ENCODE measurements at regions of chr4 and their contacts with region 1.

Region 1: GRCh38 chr4:71713611-71714203 is 70.2 kb downstream of the GC start:
- DNase-seq: no peak
- ATAC-seq: no peak

Region 2: DNA sequence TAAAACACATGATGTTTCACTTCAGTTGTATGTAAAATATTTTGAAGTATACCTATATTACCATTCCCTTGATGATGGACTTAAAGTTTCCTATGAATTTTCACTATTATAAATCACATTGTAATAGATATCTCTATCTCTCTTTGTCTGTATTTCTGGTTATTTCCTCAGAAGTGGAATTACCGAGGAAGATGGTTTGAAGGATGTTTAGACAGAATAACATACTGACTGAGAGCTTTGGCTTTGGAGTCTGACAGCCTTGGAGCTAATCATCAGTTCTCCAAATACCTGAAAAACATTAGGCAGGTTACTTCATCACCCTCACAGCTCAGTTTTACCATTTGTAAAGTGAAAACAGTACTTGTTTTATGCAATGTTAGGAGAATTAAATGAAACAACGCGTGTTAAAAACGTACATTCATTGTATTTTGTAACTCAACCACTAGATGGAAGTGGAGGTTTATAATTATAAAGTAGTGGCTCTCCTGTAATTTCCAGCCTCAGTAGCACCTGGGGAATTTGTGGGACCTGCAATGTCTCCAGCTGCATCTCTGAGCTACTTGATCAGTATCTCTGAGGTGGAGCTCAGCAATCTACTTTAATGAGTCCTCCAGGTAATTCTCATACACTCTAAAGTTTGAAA is 1061.7 kb before region 1 on chr4:
- intact Hi-C with region 1: loop called (anchors 10 kb)
- DNase-seq: no peak
- ATAC-seq: peak; percentile 46

Region 3: DNA sequence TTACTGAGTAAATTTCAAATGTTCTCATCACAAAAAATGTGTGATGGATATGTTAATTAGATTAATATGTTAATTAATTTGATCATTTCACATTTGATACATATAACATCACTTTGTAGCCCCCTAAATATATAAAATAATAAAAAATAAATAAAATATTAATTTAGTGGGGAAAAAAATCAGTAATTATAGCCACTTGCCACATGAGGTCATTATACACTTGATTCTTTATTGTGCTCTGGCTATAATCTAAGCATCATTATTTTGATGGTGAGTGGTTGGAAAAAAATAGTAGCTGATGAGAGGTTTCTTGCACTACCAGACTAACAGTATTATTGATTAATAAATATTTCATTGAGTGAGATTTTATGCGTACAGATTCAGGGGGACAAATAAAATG is 662.9 kb before region 1 on chr4:
- intact Hi-C with region 1: loop called (anchors 10 kb)
- DNase-seq: no peak
- ATAC-seq: no peak

Region 4: DNA sequence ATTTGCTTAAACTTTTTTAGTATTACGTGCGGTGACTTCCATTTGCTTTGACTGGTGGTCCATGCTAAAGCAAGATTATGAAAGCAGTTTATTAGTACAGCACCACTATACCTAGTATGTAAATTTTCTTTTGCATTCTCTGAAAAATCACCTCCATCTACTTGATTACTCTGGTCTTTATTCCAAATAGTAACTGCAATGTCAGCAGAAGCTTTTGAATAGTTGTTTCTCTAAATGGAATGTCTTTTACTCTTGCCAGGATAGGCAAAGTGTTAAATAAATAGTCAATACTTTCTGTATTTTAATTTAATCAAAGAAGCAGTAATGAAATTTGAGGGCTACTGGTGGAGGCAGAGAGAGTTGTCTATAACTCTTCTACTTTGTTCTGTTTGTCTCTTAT is 542.1 kb before region 1 on chr4:
- intact Hi-C with region 1: no loop called
- DNase-seq: no peak
- ATAC-seq: no peak

Region 5: DNA sequence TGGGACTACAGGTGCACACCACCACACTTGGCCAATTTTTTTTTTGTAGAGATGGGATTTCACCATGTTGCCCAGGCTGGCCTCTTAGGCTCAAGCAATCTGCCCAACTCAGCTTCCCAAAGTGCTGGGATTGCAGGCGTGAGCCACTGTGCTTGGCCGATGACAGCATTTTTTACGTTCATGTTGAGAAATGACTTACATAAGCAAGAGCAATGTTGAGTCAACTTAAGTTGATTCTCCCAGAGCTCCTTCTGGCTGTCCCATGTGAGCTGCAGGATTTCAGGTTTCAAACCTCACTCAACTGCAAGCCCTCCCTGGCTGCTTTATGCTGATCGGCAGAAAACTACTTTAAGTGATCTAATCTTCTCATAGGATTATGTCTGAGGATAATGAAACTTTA is 16.7 kb before region 1 on chr4:
- intact Hi-C with region 1: no loop called
- DNase-seq: no peak
- ATAC-seq: no peak

Measured in Right ventricle myocardium inferior (tissue), 1 donor.